Sciatic nerve (tissue), 2 donors: ENCODE measurements at regions of chr5 and their contacts with region 1.

Region 1: DNA sequence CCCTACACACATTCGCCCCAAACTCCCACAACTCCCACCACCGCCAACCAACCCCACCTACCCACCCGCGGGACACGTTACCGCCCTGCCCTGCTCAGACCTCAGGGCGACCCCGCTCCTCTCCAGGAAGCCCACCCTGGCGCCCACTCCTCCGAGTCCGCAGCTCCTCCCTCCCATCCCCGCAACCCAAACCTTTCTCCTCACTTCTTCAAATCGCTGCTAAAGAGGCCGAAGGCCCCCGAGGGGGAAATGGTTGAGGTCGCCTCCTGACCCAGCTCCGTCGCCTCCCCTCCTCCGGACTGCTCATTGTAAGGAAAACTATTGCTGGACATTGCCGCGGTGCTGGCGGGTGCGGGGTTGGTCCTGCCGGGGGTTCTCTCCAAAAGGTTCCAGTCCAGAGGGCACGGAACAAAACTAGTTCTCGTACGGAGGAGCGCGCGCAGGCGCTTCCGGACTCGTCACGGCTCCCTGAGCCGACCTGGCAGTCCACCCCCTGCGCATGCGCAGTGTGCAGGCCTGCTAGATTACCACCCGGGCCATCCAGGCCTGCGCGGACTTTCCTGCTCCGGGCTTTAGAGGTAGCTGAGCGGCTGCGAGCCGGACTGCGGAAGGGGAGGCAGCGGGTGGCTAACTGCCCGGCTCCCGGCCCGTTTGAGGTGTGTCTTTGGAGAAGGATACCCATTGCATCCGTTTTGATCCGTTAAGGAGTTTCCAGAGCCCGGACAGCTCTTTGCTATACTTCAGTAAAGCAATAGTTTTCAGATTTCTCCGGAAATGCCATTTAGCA is at the start of gene AP3B1:
- DNase-seq: peak; percentile 99
- ATAC-seq: peak; percentile 98
- total RNA-seq, gene AP3B1: 43.7 TPM

Region 2: GRCh38 chr5:78016863-78017529 is 277.4 kb before region 1 on chr5:
- intact Hi-C with region 1: no loop called
- DNase-seq: no peak
- ATAC-seq: no peak

Region 3: DNA sequence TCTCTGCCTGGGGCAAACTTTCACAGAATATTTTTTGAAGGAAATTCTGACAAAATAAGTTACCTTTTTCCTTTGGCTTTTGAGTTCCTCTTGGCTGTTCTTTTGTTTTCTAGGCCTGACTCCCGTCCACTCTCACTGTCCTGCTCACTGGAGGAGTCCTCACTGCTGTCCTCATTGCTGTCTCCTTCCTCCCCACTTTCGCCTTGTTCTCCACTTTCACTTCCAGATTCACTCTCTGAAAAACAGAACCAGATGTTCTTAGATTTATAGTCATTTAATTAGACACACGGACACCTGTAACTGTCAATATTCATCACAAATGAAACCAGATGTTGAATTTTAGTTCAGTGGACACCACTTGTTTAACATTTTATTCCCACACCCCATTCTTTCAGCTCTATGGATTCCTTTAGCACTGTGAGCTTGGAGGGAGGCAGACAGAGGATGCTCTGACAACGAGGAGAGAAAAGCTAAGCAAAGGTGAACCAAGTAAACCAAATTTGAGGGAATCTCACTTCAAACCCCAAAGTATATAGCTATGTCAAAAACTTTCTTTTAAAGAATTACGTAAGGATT is 180.7 kb before region 1 on chr5:
- intact Hi-C with region 1: no loop called
- DNase-seq: no peak
- ATAC-seq: no peak

Region 4: GRCh38 chr5:78359831-78360673 is 65.6 kb after region 1 on chr5 and contains the start of gene SCAMP1:
- intact Hi-C with region 1: loop called (anchors 10 kb)
- DNase-seq: peak; percentile 95
- ATAC-seq: peak; percentile 97
- total RNA-seq, gene SCAMP1: 61.6 TPM